Left ventricle myocardium inferior (tissue), 1 donor: ENCODE measurements at regions of chr17 and their contacts with region 1.

Region 1: DNA sequence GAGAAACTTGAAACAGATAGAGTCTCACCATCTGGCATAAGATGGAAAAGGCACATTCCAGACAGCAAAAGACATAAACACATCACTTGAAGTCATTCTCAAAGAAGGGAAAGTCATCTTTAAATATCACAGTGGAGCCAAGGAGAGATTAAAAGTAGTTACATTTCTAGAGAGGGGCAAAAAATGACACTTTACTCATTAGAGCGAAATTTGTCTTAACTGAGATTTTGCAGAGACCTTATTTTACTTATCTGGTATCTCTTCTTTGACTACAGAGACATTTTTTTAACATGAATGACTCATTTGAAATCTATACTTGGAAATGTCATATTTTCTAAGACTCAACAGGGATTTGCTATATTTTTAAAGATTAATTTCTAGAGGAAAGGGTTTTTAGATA is 339.0 kb upstream of the KIF2B start:
- DNase-seq: no peak
- H3K4me3 ChIP-seq: no peak overlapping the region
- H3K27ac ChIP-seq: no peak overlapping the region
- H3K4me1 ChIP-seq: no peaks in the 10 kb centered on the region
- H3K27me3 ChIP-seq: no peaks in the 10 kb centered on the region
- CTCF ChIP-seq: no peak

Region 2: GRCh38 chr17:53253956-53254597 is 229.6 kb before region 1 on chr17:
- intact Hi-C with region 1: no loop called
- DNase-seq: no peak
- H3K4me3 ChIP-seq: no peak overlapping the region
- H3K27ac ChIP-seq: no peak overlapping the region
- H3K4me1 ChIP-seq: no peaks in the 10 kb centered on the region
- H3K27me3 ChIP-seq: no peaks in the 10 kb centered on the region
- CTCF ChIP-seq: no peak

Region 3: DNA sequence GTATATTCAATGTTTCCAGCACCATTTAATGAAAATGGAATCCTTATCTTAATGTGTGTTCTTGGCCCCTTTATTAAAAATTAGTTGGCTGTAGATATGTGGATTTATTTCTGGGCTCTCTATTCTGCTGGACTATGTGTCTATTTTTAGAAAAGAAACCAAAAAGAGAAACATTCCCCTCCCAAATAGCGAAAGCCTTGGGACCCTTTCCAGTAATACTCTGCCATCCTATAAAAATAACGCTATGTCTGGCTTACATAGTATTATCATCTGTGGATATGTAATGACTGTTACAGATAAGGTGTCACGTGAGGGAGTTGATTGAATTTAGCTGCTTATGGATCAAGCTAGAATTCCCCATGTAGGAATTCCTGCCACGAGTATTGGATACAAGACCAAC is 59.8 kb after region 1 on chr17:
- intact Hi-C with region 1: loop called (anchors 10 kb)
- DNase-seq: no peak
- H3K4me3 ChIP-seq: no peak overlapping the region
- H3K27ac ChIP-seq: no peak overlapping the region
- H3K4me1 ChIP-seq: no peaks in the 10 kb centered on the region
- H3K27me3 ChIP-seq: no peaks in the 10 kb centered on the region
- CTCF ChIP-seq: no peak

Region 4: GRCh38 chr17:53607475-53607874 is 123.8 kb after region 1 on chr17:
- intact Hi-C with region 1: no loop called
- DNase-seq: no peak
- H3K4me3 ChIP-seq: no peak overlapping the region
- H3K27ac ChIP-seq: no peak overlapping the region
- H3K4me1 ChIP-seq: no peaks in the 10 kb centered on the region
- H3K27me3 ChIP-seq: no peaks in the 10 kb centered on the region
- CTCF ChIP-seq: no peak